Activated naive CD8-positive, alpha-beta T cell treated with anti-CD3 and anti-CD28 coated beads, Interleukin-2, amount 10 ng/mL, durations not matched to agents 7 days and 5 days (primary cell): ENCODE measurements at regions of chr2 and their contacts with region 1.

Region 1: GRCh38 chr2:84970868-84971509 is at the start of gene KCMF1:
- DNase-seq: peak; percentile 82
- ATAC-seq: peak; percentile 55
- H3K4me3 Mint-ChIP-seq: peak within 1 kb of the TSS; percentile 99
- H3K27ac Mint-ChIP-seq: peak within 1 kb of the TSS; percentile 100
- H3K4me1 Mint-ChIP-seq: peaks cover 36% of the 10 kb centered on the region
- H3K27me3 Mint-ChIP-seq: no peaks in the 10 kb centered on the region
- total RNA-seq, gene KCMF1: 79.3 to 81.0 TPM

Region 2: DNA sequence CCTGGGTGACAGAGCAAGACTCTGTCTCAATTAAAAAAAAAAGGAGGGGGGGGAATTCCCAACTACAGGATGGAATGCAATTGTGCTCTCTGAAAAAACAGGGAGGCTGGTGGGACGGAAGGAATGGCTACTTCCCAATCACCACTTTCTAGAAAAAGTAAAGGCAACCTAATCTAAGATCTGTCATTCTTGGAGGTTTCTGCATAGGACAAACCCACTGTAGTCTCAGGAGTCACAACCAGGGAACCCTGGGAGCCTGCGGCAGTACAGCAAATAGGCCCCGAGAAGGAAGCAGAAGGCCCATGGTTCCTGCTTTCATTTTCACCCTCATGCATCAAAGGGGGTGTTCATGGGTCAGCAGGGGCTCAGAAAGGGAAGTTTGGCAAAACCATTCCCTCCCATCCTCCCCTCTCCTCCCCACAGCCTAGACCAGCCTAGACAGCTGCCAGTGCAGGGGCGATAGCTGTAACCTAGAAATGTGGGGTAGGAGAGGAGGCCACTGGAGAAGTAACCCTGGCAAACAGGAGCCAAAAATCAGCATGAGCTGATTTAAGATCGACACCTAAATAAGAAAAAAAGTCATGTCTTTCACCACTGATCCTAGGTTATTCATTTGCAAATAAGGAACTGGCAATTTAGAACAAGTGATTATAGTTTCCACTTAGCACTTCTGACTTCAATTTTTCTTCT is 138.1 kb before region 1 on chr2:
- POLR2A ChIA-PET with region 1: no interaction called
- DNase-seq: no peak
- ATAC-seq: peak; percentile 75
- H3K4me3 Mint-ChIP-seq: peak overlapping the region; percentile 81
- H3K27ac Mint-ChIP-seq: peak overlapping the region; percentile 95
- H3K4me1 Mint-ChIP-seq: peaks cover 38% of the 10 kb centered on the region
- H3K27me3 Mint-ChIP-seq: no peaks in the 10 kb centered on the region

Region 3: GRCh38 chr2:84925724-84926376 is 45.1 kb before region 1 on chr2:
- POLR2A ChIA-PET with region 1: interaction called, 16 read pairs
- DNase-seq: peak; percentile 99
- ATAC-seq: peak; percentile 88
- H3K4me3 Mint-ChIP-seq: peak overlapping the region; percentile 96
- H3K27ac Mint-ChIP-seq: peak overlapping the region; percentile 85
- H3K4me1 Mint-ChIP-seq: peaks cover 27% of the 10 kb centered on the region
- H3K27me3 Mint-ChIP-seq: no peaks in the 10 kb centered on the region

Region 4: GRCh38 chr2:84939426-84940087 is 31.4 kb before region 1 on chr2:
- POLR2A ChIA-PET with region 1: interaction called, 94 read pairs
- DNase-seq: peak; percentile 70
- ATAC-seq: peak; percentile 93
- H3K4me3 Mint-ChIP-seq: peak overlapping the region; percentile 87
- H3K27ac Mint-ChIP-seq: peak overlapping the region; percentile 99
- H3K4me1 Mint-ChIP-seq: peaks cover 37% of the 10 kb centered on the region
- H3K27me3 Mint-ChIP-seq: no peaks in the 10 kb centered on the region

Region 5: DNA sequence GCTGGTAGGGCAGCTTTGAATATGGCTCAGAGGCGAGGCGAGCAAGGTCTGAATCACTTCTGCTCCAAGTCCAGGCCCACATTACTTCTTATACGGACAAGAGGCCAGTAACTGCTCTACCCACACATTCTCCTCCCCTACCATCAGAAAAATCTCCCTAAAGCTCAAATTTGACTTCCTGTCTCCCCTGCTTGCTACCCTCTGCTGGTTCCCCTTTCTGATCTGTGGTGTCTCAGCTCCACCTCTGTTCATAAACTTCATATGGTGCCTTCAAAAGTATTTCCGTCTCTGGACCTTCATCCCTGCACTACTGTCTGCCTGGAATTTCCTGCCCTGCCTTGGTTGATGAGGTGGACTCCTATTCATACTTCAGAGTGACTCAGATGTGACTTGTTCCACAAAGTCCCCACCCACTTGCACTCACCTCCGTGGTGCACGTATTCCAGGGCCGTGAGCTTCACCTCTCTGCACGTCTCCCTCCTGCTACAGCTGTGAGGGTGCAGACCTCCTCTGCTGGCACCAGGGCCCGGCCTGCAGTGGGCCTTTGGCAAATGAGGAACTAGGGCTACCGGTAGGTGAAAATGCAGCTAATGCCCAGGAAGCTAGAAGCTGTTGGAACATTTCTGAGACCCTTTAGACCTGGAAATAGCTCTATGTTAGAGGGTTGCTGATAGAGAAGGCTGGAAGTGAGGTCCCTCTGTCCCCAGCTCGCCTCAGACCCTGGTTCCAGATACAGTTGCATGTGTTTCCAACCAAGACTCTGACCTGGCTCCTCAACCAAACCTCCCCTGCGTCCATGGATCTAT is 24.6 kb before region 1 on chr2:
- POLR2A ChIA-PET with region 1: interaction called, 94 read pairs
- DNase-seq: peak; percentile 66
- ATAC-seq: peak; percentile 90
- H3K4me3 Mint-ChIP-seq: peak overlapping the region; percentile 80
- H3K27ac Mint-ChIP-seq: peak overlapping the region; percentile 97
- H3K4me1 Mint-ChIP-seq: peaks cover 26% of the 10 kb centered on the region
- H3K27me3 Mint-ChIP-seq: no peaks in the 10 kb centered on the region

Region 6: GRCh38 chr2:84958135-84959044 is 12.6 kb before region 1 on chr2:
- POLR2A ChIA-PET with region 1: interaction called, 12 read pairs
- DNase-seq: peak; percentile 10
- ATAC-seq: no peak
- H3K4me3 Mint-ChIP-seq: no peak overlapping the region
- H3K27ac Mint-ChIP-seq: no peak overlapping the region
- H3K4me1 Mint-ChIP-seq: peaks cover 16% of the 10 kb centered on the region
- H3K27me3 Mint-ChIP-seq: no peaks in the 10 kb centered on the region

Region 7: GRCh38 chr2:85215448-85216401 is 244.7 kb after region 1 on chr2:
- POLR2A ChIA-PET with region 1: no interaction called
- DNase-seq: no peak
- ATAC-seq: no peak
- H3K4me3 Mint-ChIP-seq: no peak overlapping the region
- H3K27ac Mint-ChIP-seq: no peak overlapping the region
- H3K4me1 Mint-ChIP-seq: no peaks in the 10 kb centered on the region
- H3K27me3 Mint-ChIP-seq: peaks cover 37% of the 10 kb centered on the region

Region 8: DNA sequence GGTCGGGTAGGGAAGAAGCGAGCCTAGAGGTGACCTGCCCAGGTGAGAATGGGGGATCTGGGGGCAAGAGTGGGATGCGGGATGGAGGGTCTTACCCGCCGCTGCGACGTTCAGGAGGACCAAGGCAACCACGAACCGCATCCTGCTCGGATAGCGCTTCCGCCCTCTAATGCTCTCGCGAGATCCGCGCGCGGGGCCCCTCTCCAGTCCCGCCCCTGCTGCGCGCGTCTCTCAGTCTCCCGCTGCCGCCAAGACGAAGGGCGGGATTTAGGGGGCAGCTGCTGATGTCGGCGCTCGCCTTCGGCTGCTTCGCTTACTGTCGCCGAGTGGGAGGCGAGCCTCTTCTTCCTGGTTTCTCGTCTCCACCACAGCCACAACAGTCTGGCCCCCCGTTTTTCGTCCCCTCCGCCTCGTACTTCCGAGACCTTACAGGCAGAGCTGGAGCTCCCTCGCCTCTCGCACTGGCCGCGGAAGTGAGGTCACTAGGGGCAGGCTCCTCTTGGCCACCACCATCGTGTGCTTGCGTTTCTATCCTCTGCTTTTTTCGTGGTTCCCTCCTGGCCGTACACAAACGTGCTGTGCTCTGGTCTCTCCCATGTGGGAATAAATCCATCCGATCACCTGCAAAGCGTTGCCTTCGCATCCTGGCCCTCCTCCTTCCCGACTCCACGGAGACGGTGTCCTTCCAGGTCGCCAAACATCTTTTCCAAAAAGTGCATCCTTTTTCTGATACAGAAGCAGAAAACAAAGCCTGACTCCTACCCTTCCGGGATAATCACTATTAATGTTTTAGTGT is 357.0 kb after region 1 on chr2 and contains the start of gene TGOLN2:
- POLR2A ChIA-PET with region 1: interaction called, 17 read pairs
- DNase-seq: peak; percentile 97
- ATAC-seq: peak; percentile 84
- H3K4me3 Mint-ChIP-seq: peak within 1 kb of the TSS; percentile 99
- H3K27ac Mint-ChIP-seq: peak within 1 kb of the TSS; percentile 100
- H3K4me1 Mint-ChIP-seq: peaks cover 25% of the 10 kb centered on the region
- H3K27me3 Mint-ChIP-seq: no peaks in the 10 kb centered on the region
- total RNA-seq, gene TGOLN2: 144 to 148 TPM